ENCODE measurements at regions of chr9 and their contacts with region 1.

Region 1: GRCh38 chr9:19925817-19926503 is 137.1 kb upstream of the SLC24A2 start:
- DNase-seq: peak; percentile 95
- H3K4me3 Mint-ChIP-seq: peak overlapping the region; percentile 75
- H3K27ac Mint-ChIP-seq: peak overlapping the region; percentile 58
- H3K4me1 Mint-ChIP-seq: peaks cover 25% of the 10 kb centered on the region
- H3K27me3 Mint-ChIP-seq: peaks cover 10% of the 10 kb centered on the region

Region 2: GRCh38 chr9:19976226-19976625 is 50.3 kb after region 1 on chr9:
- intact Hi-C with region 1: loop called (anchors 1 kb)
- DNase-seq: peak; percentile 81
- H3K4me3 Mint-ChIP-seq: peak overlapping the region; percentile 1
- H3K27ac Mint-ChIP-seq: peak overlapping the region; percentile 94
- H3K4me1 Mint-ChIP-seq: peaks cover 33% of the 10 kb centered on the region
- H3K27me3 Mint-ChIP-seq: no peaks in the 10 kb centered on the region

Region 3: DNA sequence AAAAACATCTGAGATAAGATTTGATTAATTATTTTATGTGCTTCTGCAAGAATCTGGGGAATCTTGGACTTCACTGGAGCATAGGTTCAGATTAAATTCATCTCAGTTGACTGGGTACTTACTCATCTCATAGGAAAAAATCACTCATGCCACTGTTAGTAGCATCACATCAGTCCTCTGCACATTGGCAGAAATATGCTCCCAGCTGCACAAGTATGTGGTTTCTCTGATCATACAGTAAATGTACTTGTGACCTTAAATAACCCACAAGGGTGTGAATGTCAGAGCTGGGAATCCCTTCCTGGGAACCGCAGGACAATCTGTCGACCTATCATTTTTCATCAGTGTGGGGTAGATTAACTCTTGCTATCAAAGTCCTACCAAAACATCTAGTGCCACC is 66.6 kb after region 1 on chr9:
- intact Hi-C with region 1: no loop called
- DNase-seq: no peak
- H3K4me3 Mint-ChIP-seq: no peak overlapping the region
- H3K27ac Mint-ChIP-seq: peak overlapping the region; percentile 61
- H3K4me1 Mint-ChIP-seq: peaks cover 49% of the 10 kb centered on the region
- H3K27me3 Mint-ChIP-seq: no peaks in the 10 kb centered on the region

Region 4: GRCh38 chr9:20209391-20210340 is 283.7 kb after region 1 on chr9:
- intact Hi-C with region 1: loop called (anchors 1 kb)
- DNase-seq: peak; percentile 89
- H3K4me3 Mint-ChIP-seq: peak overlapping the region; percentile 57
- H3K27ac Mint-ChIP-seq: peak overlapping the region; percentile 95
- H3K4me1 Mint-ChIP-seq: peaks cover 36% of the 10 kb centered on the region
- H3K27me3 Mint-ChIP-seq: no peaks in the 10 kb centered on the region

Region 5: DNA sequence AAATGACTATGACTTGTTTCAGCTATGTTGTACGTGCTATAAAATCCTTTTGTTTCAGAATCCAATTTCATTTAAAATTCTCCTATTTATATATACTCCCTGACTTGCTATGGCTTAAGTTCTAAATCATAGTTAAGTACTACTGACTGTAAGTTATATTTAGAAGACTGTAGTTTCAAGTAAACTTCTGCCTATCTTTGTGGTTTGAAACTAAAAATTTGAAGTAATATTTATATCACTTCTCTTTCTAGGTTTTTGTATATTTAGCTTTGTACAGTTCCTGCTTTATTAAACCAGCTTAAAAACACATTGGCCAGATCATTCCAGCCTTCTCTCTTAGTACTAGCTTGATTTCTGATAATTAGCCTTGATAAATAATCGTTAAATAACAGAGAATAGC is 500.1 kb after region 1 on chr9:
- intact Hi-C with region 1: loop called (anchors 5 kb)
- DNase-seq: no peak
- H3K4me3 Mint-ChIP-seq: no peak overlapping the region
- H3K27ac Mint-ChIP-seq: no peak overlapping the region
- H3K4me1 Mint-ChIP-seq: peaks cover 7% of the 10 kb centered on the region
- H3K27me3 Mint-ChIP-seq: no peaks in the 10 kb centered on the region

Region 6: GRCh38 chr9:20552874-20553575 is 627.1 kb after region 1 on chr9:
- intact Hi-C with region 1: loop called (anchors 5 kb)
- DNase-seq: peak; percentile 69
- H3K4me3 Mint-ChIP-seq: peak overlapping the region; percentile 57
- H3K27ac Mint-ChIP-seq: peak overlapping the region; percentile 82
- H3K4me1 Mint-ChIP-seq: peaks cover 67% of the 10 kb centered on the region
- H3K27me3 Mint-ChIP-seq: no peaks in the 10 kb centered on the region

Region 7: DNA sequence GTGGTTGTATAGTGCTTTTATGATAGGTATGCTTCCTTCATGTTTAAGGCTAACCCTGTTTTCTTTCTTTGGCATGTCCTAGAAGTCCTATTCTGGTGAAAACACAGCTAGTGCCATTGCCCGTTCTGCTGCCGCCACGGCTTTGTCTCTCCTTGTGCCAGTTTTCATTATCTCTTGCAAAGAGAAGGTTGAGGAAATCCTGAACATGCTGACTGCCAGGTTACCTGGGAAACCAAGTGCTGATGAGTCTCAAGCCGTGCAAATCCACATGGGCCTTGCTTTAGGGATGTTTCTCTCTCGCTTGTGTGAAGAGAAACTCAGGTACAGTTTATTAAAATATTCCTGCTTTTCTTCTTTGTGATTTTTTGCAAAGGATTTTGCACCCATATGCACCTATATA is 1003.3 kb after region 1 on chr9:
- intact Hi-C with region 1: loop called (anchors 5 kb)
- DNase-seq: no peak
- H3K4me3 Mint-ChIP-seq: no peak overlapping the region
- H3K27ac Mint-ChIP-seq: no peak overlapping the region
- H3K4me1 Mint-ChIP-seq: peaks cover 25% of the 10 kb centered on the region
- H3K27me3 Mint-ChIP-seq: no peaks in the 10 kb centered on the region

Region 8: GRCh38 chr9:21110708-21111576 is 1185.0 kb after region 1 on chr9:
- intact Hi-C with region 1: loop called (anchors 1 kb)
- DNase-seq: peak; percentile 81
- H3K4me3 Mint-ChIP-seq: no peak overlapping the region
- H3K27ac Mint-ChIP-seq: no peak overlapping the region
- H3K4me1 Mint-ChIP-seq: no peaks in the 10 kb centered on the region
- H3K27me3 Mint-ChIP-seq: peaks cover 24% of the 10 kb centered on the region